Psoas muscle (tissue), 8 donors: ENCODE measurements at regions of chr16 and their contacts with region 1.

Region 1: DNA sequence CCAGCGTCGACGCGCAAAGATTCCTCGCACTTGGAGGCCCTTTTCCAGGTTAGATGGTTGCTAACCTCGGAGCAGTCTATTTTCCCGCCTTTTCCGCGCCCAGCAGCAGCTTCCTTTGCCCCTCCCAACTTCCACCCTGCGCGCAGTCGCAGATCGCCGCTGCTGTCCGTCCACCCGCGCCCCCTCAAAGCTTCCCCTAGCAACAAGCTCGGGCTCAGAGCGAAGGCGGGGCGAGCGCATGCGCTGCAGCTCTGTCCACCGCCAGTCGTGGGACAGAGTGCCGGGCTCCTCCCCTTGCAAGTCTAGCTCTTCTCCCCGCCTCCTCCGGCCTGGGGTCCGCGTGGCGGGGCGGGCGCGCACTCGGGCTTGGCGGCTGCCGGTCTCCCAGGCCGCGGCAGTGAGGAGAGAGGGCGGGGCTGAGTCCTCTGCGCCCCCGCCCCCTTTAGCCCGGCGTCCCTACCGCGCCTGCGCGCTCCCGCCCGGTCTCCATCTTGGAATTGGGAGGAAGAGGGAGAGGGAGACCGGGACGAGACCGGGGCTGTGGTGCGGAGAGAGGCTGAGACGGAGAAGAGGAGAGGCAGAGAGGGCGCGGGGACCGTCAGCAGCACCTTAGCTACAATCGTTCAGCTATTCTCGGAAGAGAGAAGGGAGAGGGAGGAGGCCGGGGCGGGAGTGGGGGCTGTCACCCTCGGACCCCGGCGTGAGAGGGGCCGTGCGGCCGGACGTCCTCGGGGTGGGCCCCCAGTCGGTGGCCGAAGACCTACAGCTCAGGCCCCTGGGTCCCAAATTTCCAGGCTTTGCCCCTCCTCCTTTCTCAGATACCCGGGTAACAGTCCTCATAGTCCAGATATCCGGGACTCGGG is at the start of gene TAOK2:
- DNase-seq: peak; percentile 99 to 100
- ATAC-seq: peak; percentile 96 to 99 (median 98)
- H3K4me3 ChIP-seq: peak within 1 kb of the TSS; percentile 95
- H3K27ac ChIP-seq: peak within 1 kb of the TSS; percentile 91
- H3K4me1 ChIP-seq: peaks cover 25% of the 10 kb centered on the region
- H3K27me3 ChIP-seq: no peaks in the 10 kb centered on the region
- CTCF ChIP-seq: no peak
- total RNA-seq, gene TAOK2: 18.6 to 28.6 (median 22.0) TPM

Region 2: DNA sequence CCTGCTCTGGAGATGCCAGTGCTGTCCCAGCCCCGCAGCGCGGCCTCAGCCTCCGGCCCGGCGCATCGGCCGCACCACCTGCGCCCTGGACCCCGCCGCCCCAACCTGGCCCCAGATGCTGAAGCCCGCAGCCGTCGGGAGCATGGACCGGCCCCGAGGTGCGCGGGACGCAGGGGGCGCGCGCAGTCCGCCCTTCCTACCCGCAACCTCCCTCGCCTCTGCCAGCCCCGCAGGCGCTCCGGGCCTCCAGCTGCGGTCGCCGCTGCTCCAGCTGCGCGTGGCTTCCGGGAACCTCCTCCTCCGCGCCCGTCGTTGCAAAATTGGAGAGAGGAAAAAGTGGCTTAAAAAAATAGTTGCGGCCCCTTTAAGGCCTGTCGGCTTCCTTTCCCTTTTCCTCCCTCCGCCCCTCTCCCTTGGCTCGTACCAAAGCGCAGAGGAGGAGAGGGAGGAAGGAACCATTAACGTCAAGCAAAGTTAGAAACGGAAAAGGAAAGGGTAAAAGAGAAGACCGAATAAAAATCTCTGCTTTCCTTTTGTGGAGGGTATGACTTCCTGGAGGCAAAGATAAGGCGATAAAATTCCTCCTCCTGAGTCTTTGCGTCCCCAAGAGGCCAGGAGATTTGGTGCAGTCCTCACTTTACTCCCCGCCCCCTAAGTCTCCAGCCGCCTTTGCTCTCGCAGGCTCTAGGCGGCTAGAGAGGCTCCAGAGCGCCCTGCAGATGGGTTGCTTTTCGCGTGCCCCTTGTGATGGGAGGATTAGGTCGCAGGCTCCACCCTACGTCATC is 110.5 kb before region 1 on chr16 and contains the start of gene CDIPT:
- intact Hi-C with region 1: loop called in 1 of 2 experiments (anchors 5 kb)
- DNase-seq: peak; percentile 95 to 97
- ATAC-seq: peak; percentile 98 to 99 (median 99)
- H3K4me3 ChIP-seq: peak within 1 kb of the TSS; percentile 95
- H3K27ac ChIP-seq: peak within 1 kb of the TSS; percentile 85
- H3K4me1 ChIP-seq: peaks cover 10% of the 10 kb centered on the region
- H3K27me3 ChIP-seq: no peaks in the 10 kb centered on the region
- CTCF ChIP-seq: peak; percentile 39
- total RNA-seq, gene CDIPT: 24.7 to 36.4 (median 32.3) TPM

Region 3: GRCh38 chr16:29926005-29926710 is 47.5 kb before region 1 on chr16 and contains the start of gene KCTD13:
- intact Hi-C with region 1: loop called (anchors 5 kb)
- DNase-seq: peak; percentile 83 to 92
- ATAC-seq: peak; percentile 98 to 100 (median 99)
- H3K4me3 ChIP-seq: peak within 1 kb of the TSS; percentile 99
- H3K27ac ChIP-seq: peak within 1 kb of the TSS; percentile 90
- H3K4me1 ChIP-seq: peaks cover 27% of the 10 kb centered on the region
- H3K27me3 ChIP-seq: no peaks in the 10 kb centered on the region
- CTCF ChIP-seq: no peak
- total RNA-seq, gene KCTD13: 3.3 to 5.4 (median 4.1) TPM

Region 4: DNA sequence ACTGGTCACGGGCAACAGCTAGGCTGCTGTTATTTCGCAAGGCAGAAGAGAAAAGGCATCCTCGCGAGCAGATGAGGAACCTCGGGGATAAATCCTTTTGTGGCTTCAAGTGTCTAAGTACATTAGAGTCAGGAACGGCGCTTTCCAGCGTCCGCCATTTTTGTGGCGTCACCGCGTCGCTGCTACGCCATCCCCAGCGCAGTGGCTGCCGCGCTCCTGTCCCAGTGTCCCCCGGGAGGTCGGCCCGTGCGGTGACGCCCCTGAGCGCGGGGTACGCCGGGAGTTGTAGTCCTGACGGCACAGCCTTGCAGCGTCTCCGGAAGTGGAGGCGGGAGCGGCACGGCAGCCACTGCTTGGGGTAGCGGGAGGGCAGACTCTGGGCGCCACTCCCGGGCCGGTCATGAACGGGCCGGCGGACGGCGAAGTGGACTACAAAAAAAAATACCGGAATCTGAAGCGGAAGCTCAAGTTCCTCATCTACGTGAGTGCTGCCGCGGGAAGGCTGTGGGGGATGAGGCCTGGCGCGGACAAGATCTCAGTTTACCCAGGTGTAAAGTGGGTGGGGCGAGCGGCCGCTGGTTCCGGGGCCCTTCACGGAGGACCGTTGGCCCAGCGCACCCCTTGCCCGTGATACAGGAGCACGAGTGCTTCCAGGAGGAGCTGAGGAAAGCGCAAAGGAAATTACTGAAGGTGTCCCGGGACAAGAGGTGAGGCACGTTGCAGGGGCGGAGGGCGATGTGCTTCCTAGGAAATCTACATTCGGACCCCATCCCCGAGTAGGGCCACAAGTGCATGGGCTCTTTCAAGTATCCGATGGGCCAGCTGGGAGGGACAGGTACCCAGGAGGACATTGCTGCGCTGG is 22.5 kb after region 1 on chr16 and contains the start of gene INO80E:
- intact Hi-C with region 1: loop called (anchors 1 to 2 kb)
- DNase-seq: peak; percentile 99 to 100
- ATAC-seq: peak; percentile 98 to 99 (median 98)
- H3K4me3 ChIP-seq: peak within 1 kb of the TSS; percentile 86
- H3K27ac ChIP-seq: peak within 1 kb of the TSS; percentile 99
- H3K4me1 ChIP-seq: peaks cover 21% of the 10 kb centered on the region
- H3K27me3 ChIP-seq: no peaks in the 10 kb centered on the region
- CTCF ChIP-seq: no peak
- total RNA-seq, gene INO80E: 30.5 to 43.3 (median 34.1) TPM

Region 5: DNA sequence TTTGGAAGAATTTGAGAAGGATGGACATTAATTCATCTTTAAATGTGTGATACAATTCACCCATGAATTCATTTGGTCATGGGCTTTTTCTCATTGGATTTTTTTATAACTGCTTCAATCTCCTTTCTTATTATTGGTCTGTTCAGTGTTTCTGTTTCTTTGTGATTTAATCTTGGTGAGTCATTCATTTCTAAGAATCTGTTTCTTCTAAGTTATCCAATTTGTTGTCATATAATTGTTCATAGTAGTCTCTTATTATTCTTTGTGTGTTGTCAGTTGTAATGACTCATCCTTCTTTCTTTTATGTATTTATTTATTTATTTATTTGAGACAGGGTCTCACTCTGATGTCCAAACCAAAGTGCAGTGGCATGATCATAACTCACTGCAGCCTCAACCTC is 1753.9 kb after region 1 on chr16:
- intact Hi-C with region 1: loop called in 1 of 2 experiments (anchors 10 kb)
- DNase-seq: no peak
- ATAC-seq: no peak
- H3K4me3 ChIP-seq: no peak overlapping the region
- H3K27ac ChIP-seq: no peak overlapping the region
- H3K4me1 ChIP-seq: no peaks in the 10 kb centered on the region
- H3K27me3 ChIP-seq: no peaks in the 10 kb centered on the region
- CTCF ChIP-seq: no peak